Activated T-helper 2 cell treated with anti-CD3 and anti-CD28 coated beads, Interferon-gamma antibody, Interleukin-2, Interleukin-4, amounts not matched to agents 10 μg/mL and 5 μg/mL and 100 μg/mL, durations not matched to agents 14 hours and 24 hours and 36 hours (primary cell): ENCODE measurements at regions of chr5 and their contacts with region 1.

Region 1: DNA sequence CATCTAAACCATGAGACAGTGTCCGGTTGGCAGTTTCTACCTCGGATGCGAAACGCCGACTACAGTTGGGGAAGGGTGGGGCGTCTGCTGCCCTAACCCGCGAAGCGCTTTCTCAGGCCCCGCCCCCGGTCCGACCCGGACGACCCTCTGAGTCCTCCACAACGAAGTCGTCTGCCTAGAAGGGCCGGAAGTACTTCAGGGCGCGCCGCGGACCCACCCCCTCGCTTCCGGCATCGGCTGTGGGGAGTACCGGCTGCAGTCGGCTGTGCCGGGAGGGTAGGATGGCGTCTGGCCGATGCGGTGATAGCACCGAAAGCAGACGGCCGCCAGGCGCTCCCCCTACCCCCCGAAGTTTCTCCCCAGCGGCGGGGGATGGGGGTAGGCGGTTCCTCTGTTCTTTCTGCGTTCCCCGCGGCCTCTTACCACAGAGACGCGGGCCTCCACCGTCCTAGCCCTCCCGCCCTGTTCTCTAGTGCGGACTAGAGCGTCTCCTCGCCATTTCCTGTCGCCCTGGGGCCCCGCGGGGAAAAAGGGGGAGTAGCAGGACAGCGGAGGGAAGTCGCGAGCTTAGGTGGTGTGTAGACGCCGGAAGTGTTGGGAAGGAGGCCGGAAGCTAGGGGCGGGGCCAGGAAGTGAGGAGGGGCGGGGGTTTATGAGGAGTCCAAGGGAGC is at the start of gene TRIM41:
- DNase-seq: peak; percentile 96
- H3K4me3 Mint-ChIP-seq: peak within 1 kb of the TSS; percentile 97
- H3K27ac Mint-ChIP-seq: peak within 1 kb of the TSS; percentile 98
- H3K4me1 Mint-ChIP-seq: peaks cover 55% of the 10 kb centered on the region
- H3K27me3 Mint-ChIP-seq: peaks cover 2% of the 10 kb centered on the region
- total RNA-seq, gene TRIM41: 32.2 and 33.0 TPM in 2 replicates

Region 2: DNA sequence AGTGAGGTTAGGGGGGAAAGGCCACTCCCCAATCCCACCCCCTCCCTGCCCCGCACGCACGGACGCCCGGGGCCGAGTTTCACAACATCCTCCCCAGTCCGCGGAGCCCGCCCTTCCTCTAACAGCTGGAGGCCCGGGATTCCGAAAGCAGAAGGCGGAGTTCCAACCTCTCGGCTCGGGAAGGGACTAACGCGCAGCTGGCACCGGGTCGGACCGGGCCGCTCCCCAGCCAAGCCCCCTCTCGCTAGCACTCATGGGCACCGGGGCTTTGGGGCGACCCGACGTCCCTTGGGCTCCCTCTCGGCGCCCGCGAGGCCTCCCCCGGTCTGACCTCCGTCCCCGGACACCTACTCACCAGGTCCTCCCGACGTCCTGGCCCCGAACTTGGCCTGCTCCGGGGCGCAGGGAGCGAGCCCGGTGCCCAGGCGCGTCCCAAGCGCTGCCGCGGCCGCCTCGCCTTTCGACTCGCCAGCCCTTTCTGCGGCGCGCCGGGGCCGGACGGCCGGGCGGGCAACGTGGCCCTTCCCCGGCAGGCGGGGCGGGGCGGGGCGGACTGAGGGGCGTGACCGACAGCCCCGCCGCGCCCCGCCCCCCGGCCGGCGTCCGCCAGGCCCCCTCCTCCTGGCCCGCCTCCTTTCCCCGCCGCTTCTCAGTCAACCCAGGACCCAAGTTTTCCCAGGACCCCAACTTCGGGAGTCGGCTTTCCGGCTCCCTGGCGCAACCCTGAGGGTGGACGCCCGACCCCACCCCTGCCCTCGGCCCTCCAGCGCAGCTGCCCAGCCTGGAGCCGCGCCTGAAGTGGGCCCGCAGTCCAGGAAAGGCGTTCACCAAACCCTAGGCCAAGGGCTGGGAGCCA is 420.6 kb before region 1 on chr5 and contains the start of gene MGAT1:
- intact Hi-C with region 1: loop called (anchors 2 kb)
- DNase-seq: peak; percentile 66
- H3K4me3 Mint-ChIP-seq: peak within 1 kb of the TSS; percentile 92
- H3K27ac Mint-ChIP-seq: peak within 1 kb of the TSS; percentile 91
- H3K4me1 Mint-ChIP-seq: peaks cover 74% of the 10 kb centered on the region
- H3K27me3 Mint-ChIP-seq: no peaks in the 10 kb centered on the region
- total RNA-seq, gene MGAT1: 122 TPM in 2 replicates

Region 3: GRCh38 chr5:181207214-181208107 is 15.7 kb before region 1 on chr5:
- intact Hi-C with region 1: loop called (anchors 1 kb)
- DNase-seq: peak; percentile 74
- H3K4me3 Mint-ChIP-seq: peak overlapping the region; percentile 90
- H3K27ac Mint-ChIP-seq: peak overlapping the region; percentile 92
- H3K4me1 Mint-ChIP-seq: peaks cover 31% of the 10 kb centered on the region
- H3K27me3 Mint-ChIP-seq: peaks cover 24% of the 10 kb centered on the region

Region 4: DNA sequence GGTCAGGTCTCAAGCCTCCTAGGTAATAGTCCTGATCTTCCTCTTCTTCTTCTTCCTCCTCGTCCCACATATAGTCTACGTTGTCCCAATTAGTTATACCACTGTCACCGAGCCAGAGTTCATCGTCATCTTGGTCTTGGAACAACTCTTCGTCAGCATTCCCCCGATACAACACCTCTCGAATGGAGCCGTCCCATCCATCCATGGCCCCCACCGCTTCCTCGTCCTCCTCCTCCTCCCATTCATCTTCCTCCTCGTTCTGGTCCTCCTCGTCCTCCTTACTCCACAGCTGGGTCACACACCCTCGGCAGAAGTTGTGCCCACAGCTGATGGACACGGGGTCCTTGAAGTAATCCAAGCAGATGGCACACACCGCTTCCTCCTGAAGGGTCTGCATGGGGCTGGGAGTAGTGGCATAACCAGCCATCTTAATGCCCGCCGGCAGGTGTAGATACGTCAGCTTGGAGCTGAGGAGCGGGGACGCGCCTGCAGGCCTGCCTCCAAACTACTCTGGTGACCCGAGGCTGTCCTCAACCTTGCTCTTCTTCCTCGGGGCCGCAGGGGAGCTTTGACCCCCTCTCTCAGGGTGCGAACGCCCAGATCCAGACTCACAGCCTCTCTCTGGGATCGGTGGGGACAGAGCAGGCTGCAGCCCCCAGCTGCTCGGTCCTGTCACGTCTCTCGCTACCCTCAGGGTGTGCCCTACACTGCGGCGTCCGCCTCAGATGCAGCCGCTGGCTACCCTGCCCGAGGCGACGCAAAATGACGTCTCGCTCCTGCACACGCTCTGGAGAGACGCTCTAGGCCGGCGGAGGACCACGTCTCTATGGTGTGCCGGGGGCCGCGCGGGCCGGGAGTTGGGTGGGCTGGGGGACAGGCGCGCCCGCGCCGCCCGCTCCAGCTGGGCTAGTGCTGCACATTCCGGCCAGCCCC is 37.5 kb after region 1 on chr5 and contains the start of gene TRIM52:
- intact Hi-C with region 1: loop called (anchors 1 kb)
- DNase-seq: peak; percentile 88
- H3K4me3 Mint-ChIP-seq: peak within 1 kb of the TSS; percentile 99
- H3K27ac Mint-ChIP-seq: peak within 1 kb of the TSS; percentile 94
- H3K4me1 Mint-ChIP-seq: peaks cover 40% of the 10 kb centered on the region
- H3K27me3 Mint-ChIP-seq: no peaks in the 10 kb centered on the region
- total RNA-seq, gene TRIM52: 15.5 and 16.9 TPM in 2 replicates